Caco-2 (cell line): ENCODE measurements at regions of chrX and their contacts with region 1.

Region 1: GRCh38 chrX:71128915-71129765 is 10.7 kb downstream of the MED12 start:
- DNase-seq: peak; percentile 52 to 70
- H3K4me3 ChIP-seq: no peak overlapping the region
- H3K4me3 Mint-ChIP-seq: no peak overlapping the region
- H3K27ac Mint-ChIP-seq: peak overlapping the region; percentile 5
- H3K4me1 ChIP-seq: no peaks in the 10 kb centered on the region
- H3K4me1 Mint-ChIP-seq: peaks cover 17% of the 10 kb centered on the region
- H3K27me3 ChIP-seq: no peaks in the 10 kb centered on the region
- H3K27me3 Mint-ChIP-seq: no peaks in the 10 kb centered on the region
- CTCF ChIP-seq: peak; percentile 68 to 76

Region 2: GRCh38 chrX:71095543-71095911 is 33.6 kb before region 1 on chrX and contains the start of gene FOXO4:
- CTCF ChIA-PET with region 1: no interaction called
- POLR2A ChIA-PET with region 1: no interaction called
- intact Hi-C with region 1: loop called (anchors 1 kb)
- DNase-seq: peak; percentile 87 to 88
- H3K4me3 ChIP-seq: peak within 1 kb of the TSS; percentile 66
- H3K4me3 Mint-ChIP-seq: peak within 1 kb of the TSS; percentile 91
- H3K27ac Mint-ChIP-seq: peak within 1 kb of the TSS; percentile 57
- H3K4me1 ChIP-seq: no peaks in the 10 kb centered on the region
- H3K4me1 Mint-ChIP-seq: no peaks in the 10 kb centered on the region
- H3K27me3 ChIP-seq: no peaks in the 10 kb centered on the region
- H3K27me3 Mint-ChIP-seq: no peaks in the 10 kb centered on the region
- CTCF ChIP-seq: no peak
- total RNA-seq, gene FOXO4: 13.7 and 17.4 TPM in 2 replicates